BJ (cell line): ENCODE measurements at regions of chr5 and their contacts with region 1.

Region 1: DNA sequence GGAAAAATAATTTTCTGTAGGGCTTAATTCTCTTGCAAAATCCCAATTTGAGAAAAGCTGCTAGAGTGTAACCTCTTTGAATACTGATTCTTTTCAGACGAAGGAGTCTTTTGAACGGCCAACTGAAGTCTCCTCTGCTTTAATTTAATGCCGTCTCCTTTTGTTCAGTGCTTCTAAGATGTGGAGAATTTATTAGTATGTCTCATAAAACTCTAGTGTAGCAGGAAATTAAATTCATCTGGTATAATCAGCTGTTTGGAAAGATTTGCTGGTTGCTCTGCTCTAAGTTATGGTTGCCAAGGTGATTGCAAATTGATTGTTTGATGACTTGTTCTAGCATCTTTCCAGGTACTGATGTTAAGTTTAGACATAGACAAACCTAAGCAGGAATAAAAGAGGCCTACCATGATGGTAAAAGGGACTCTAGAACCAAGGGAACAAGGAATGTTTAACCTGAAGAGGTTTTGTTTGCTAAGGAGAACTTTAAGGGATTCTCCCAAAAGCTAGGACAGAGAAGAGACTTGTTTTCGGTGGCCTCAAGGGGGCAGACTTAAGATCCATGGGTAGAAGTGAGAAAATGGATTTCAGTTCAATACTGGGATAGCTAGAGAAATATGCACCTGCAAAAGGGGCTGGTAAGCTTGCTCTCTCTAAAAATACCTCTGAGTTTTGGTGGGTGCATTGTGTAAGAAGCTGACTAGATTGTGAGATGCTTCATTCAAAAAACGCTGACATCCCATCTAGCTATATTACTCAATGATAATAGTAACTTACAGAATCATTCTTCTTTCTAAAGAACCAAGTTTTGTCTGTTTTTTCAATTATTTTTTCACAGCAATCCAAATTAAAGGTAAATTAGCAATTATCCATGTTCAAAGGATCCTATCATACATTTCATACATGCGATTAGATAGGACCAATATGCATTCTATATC is 5.7 kb upstream of the ADRB2 start:
- DNase-seq: no peak
- H3K4me3 ChIP-seq: no peak overlapping the region
- H3K27me3 ChIP-seq: no peaks in the 10 kb centered on the region
- CTCF ChIP-seq: peak; percentile 73

Region 2: GRCh38 chr5:148606296-148606695 is 214.4 kb before region 1 on chr5:
- CTCF ChIA-PET with region 1: no interaction called
- POLR2A ChIA-PET with region 1: no interaction called
- DNase-seq: no peak
- H3K4me3 ChIP-seq: no peak overlapping the region
- H3K27me3 ChIP-seq: no peaks in the 10 kb centered on the region
- CTCF ChIP-seq: no peak

Region 3: DNA sequence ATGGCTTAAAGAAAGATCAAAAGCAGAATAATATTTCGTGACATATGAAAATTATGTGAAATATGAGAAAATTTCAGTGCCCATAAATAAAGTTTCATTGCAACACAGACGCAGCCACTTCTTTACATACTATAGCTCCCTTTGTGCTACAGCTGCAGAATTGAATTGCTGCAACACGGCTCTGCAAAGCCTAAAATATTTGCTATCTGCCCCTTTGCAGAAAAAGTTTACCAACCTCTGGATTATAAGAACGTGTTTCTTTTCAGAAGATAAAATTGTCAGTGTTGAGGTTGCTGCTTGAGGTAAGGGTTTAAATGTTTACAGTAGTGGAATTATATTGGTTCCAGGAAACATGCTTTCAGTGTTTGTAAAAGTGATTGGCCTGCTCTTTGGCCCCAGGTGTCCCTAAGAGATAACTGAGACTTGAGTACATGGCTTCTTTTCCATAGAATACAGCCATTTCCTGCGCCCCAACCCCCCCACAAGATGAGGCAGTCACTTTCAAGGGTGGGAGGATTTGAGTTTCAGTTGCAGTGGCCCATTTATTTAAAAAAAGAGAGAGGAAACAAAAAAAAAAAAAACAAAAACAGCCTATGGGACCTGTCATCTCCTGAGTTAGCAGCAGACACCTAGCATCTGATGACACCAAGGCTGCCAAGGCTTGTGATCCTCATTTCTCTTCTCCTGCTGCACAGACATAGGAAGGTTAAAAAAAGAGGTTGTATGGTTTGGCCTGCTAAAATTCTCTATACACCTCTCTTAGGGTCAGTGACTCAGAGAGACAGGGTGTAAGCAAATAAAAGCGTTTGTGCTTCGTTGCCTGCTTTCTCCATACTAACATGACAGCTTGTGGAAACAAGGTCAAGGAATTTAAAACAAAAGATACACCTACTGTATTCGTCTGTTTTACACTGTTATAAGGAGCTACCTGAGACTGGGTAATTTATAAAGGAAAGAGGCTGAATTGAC is 138.4 kb before region 1 on chr5:
- CTCF ChIA-PET with region 1: no interaction called
- POLR2A ChIA-PET with region 1: no interaction called
- DNase-seq: no peak
- H3K4me3 ChIP-seq: no peak overlapping the region
- H3K27me3 ChIP-seq: no peaks in the 10 kb centered on the region
- CTCF ChIP-seq: no peak

Region 4: DNA sequence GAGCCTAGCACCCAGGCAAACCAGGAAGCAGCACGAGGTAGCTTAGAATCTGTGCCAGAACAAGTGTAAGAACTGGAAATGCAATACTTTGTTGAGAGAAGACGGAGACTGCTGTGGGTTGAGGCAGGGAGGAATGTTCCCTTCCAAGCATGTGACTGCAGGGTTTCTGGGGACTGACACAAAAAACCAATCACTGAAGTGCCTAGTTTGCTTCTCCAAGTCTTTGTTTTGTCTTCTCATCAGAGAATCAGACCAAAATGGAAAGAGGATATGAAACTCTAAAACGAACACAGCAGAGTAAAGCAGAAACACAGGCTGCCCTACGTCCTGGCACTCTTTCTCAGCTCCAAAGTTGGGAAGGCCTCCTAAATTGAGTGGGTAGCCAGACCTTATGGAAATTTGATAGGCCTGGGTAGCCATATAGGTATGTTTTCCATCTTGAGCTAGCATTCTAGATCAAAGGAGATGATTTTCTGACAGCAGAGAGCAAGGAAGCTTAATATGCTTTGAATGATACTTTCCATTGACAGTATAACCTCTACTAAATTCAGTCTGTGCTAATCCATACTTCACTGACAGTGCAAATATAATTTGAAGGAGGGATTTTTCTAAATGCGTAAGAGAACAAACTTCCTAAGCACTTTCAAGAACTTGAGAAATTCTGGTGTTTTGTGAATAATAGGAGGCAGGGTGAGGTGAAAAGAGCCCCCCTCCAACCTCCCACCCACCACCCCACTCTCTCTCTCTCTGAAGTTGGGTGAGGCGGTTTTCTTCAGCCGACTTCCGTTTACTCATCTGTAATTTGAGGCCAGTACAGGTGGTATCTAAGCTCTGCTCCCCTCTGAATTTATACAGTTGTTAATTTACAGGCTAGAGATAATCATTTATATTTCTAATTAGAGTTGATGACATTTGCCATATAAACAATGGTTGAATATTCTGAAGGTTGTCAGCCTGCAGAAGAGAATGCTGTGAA is 11.2 kb after region 1 on chr5:
- CTCF ChIA-PET with region 1: interaction called, 12 read pairs
- POLR2A ChIA-PET with region 1: no interaction called
- DNase-seq: no peak
- H3K4me3 ChIP-seq: no peak overlapping the region
- H3K27me3 ChIP-seq: no peaks in the 10 kb centered on the region
- CTCF ChIP-seq: no peak

Region 5: DNA sequence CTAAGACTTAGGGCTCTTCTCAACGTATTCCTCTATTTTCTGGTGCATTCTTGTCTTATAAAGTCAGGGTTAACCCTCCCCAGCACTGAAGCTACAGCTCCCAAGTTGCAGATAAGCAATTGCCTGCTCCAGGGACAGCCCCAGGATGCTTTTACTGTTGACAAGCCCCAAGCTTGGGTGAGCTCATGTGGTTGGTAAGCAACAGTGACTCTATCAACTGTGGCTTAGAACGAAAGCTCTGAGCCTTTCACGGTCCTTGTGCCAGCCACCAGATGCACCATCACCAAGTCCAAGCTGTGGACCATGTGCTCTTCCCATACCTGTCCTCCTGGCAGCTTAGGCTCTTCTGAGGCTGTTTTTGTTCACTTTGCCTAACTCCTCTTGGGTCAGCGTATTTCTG is 19.2 kb after region 1 on chr5:
- CTCF ChIA-PET with region 1: interaction called, 15 read pairs
- POLR2A ChIA-PET with region 1: no interaction called
- DNase-seq: no peak
- H3K4me3 ChIP-seq: no peak overlapping the region
- H3K27me3 ChIP-seq: no peaks in the 10 kb centered on the region
- CTCF ChIP-seq: no peak

Region 6: DNA sequence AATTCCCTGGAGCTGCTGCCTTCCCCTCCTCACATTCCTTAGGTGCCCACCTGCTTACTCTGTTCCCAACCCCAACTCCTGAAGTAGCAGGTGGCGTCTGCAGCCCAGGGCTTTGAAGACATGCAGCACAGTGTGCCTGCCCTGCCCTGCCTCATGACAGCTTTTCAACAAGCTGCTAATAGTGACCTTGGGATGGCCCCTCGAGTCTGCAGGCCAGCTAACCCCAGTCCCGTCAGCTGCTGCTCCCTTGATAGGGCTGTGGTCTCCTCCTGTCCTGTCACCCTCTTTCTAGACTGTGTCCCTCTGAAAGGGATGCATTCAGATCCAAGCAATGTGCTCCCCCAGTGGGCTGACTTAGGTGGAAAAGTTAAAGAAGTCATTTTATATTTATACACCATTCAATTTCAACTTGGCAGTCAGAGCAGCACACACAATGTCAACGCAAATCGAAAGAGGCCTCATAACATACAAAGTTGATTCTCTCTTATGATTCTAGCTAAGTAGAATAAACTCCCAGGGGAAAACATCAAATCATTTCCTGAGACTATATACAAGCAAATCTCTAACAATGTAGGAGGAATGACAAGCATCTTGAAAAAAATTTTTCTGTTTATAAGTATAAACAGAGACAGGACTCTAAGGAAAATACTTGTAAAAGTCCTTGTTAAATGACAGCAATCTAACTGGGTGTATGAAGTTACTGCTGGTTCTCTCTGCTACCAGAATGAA is 43.5 kb after region 1 on chr5:
- CTCF ChIA-PET with region 1: interaction called, 10 read pairs
- POLR2A ChIA-PET with region 1: no interaction called
- DNase-seq: no peak
- H3K4me3 ChIP-seq: no peak overlapping the region
- H3K27me3 ChIP-seq: no peaks in the 10 kb centered on the region
- CTCF ChIP-seq: no peak

Region 7: DNA sequence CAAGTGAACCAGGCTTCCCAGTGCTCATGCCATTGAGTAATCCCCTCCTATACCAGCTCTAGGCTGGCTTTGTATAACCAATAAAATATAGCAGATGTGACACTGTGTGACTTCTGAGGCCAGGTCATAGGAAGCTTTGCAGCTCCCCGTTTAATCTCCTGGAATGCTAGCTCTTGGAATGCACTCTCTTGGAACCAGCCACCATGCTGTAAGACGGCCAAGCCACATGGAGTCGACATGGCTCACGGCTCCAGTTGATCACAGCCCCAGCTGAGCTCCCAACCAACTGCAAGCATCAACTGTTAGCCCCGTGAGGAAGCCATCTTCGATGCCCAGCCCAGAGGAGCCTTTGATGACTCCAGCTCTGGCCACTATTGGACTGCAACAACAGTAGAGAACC is 167.6 kb after region 1 on chr5:
- CTCF ChIA-PET with region 1: interaction called, 14 read pairs
- POLR2A ChIA-PET with region 1: no interaction called
- DNase-seq: no peak
- H3K4me3 ChIP-seq: no peak overlapping the region
- H3K27me3 ChIP-seq: no peaks in the 10 kb centered on the region
- CTCF ChIP-seq: no peak

Region 8: GRCh38 chr5:149153751-149154610 is 333.3 kb after region 1 on chr5:
- CTCF ChIA-PET with region 1: no interaction called
- POLR2A ChIA-PET with region 1: no interaction called
- DNase-seq: no peak
- H3K4me3 ChIP-seq: no peak overlapping the region
- H3K27me3 ChIP-seq: no peaks in the 10 kb centered on the region
- CTCF ChIP-seq: no peak